Colonic mucosa (tissue), 4 donors: ENCODE measurements at regions of chr6 and their contacts with region 1.

Region 1: DNA sequence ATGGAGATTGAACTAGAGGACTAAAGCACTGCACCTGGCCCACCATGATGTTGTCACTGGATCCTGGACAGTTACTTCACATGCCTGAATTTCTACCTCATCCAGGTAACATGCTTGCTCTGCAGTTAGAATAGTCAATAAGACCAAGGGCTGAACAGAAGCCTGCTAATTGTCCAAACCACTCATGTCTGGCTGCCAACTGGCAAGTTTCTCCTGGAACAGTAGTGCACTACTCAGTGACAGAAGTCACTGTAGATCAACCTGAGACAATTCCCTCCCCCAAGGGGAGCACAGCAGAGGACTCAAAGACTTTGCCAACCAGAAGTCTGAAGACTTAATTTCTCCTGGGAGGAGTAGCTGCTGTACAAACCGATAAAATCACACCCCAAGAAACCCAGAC is 454.6 kb upstream of the MARCKS start:
- DNase-seq: no peak
- H3K4me3 ChIP-seq: no peak overlapping the region
- H3K27ac ChIP-seq: no peak overlapping the region
- H3K4me1 ChIP-seq: no peaks in the 10 kb centered on the region
- H3K27me3 ChIP-seq: no peaks in the 10 kb centered on the region
- CTCF ChIP-seq: no peak

Region 2: DNA sequence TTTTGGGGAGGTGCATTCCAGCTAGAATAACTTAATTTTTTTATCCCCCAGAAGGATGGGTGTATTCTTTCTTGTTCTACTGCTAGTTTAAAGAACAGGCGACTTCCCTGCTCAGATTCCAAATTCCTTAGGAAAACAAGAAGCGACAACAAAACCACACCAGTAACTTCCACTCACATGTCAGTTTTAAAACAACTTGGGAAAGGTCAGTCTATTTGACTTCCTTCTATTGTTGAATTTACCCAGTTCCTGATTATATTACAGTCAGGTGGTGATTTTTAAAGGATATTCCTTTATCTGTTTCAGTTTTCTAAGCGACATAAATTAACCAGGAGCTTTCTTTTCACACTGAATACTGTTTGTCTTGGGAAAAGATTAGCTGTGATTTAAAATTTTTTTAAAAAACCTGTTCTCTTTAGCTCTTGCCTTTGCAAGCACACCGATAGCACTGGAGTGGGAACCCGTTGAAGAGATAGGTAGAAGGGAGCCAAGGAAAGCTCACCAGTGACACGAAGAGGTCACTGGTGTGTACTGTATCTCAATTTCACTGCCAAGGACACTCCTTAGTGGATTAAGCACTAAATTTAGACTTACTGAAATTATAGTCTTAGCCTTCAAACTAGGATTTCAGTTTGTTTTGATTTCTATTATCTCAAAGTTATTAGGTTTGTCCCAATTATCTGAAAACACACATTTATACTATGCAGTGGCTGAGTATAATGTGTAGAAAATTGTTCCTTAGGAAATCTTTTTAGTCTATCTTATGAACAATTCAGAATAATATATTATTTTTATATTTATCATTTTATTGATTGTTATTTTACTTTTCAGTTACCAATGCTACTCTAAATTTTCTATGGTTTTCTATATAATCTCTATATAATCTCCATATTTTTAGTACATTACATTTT is 476.9 kb after region 1 on chr6:
- intact Hi-C with region 1: loop called (anchors 10 kb)
- DNase-seq: peak; percentile 70
- H3K4me3 ChIP-seq: no peak overlapping the region
- H3K27ac ChIP-seq: no peak overlapping the region
- H3K4me1 ChIP-seq: no peaks in the 10 kb centered on the region
- H3K27me3 ChIP-seq: no peaks in the 10 kb centered on the region
- CTCF ChIP-seq: peak; percentile 63